ENCODE measurements at regions of chr17 and their contacts with region 1.

Region 1: GRCh38 chr17:9470171-9470570 is 105.4 kb downstream of the STX8 start:
- DNase-seq: no peak
- H3K4me3 Mint-ChIP-seq: peak overlapping the region; percentile 26
- H3K27ac Mint-ChIP-seq: peak overlapping the region; percentile 77
- H3K4me1 Mint-ChIP-seq: peaks cover 45% of the 10 kb centered on the region
- H3K27me3 Mint-ChIP-seq: no peaks in the 10 kb centered on the region

Region 2: DNA sequence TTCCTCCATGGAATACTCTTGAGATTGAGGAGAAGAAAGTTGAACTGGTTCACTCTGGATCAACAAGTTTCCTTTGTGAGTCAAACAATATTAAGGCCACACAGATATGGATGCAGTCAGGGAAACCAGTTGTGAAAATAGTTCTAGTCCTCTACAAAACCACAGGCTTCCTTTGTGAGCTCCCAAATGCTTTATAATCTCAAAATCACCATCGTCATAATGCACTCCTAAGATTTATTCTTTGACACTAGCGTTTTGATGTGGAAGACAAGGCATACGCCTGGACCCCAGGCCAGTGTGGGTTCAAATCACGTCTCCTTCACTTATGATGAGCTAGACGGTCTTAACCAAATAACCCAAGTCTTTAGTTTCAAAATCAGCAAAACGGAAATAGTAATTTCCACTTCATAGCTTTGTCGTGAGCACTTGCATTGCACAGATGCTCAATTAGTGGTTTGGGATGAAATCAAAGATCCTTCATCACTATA is 37.2 kb before region 1 on chr17:
- CTCF ChIA-PET with region 1: no interaction called
- POLR2A ChIA-PET with region 1: no interaction called
- intact Hi-C with region 1: loop called (anchors 1 kb)
- DNase-seq: peak; percentile 28
- H3K4me3 Mint-ChIP-seq: no peak overlapping the region
- H3K27ac Mint-ChIP-seq: no peak overlapping the region
- H3K4me1 Mint-ChIP-seq: peaks cover 21% of the 10 kb centered on the region
- H3K27me3 Mint-ChIP-seq: no peaks in the 10 kb centered on the region

Region 3: DNA sequence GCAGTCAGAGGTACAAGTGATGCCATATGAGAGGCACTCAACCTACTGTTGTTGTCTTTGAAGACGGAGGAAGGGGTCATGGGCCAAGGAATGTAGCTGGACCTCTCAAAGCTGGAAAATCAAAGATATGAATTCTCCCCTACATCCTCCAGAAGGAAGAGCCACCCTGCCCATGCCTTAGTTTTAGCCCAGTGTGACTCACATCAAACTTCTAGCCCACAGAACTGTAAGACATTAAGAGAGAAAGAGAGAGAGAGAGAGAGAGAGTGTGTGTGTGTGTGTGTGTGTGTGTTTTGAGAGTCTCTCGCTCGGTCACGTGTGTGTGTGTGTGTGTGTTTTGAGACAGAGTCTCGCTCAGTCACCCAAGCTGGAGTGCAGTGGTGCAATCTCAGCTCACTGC is 18.4 kb after region 1 on chr17:
- CTCF ChIA-PET with region 1: no interaction called
- POLR2A ChIA-PET with region 1: no interaction called
- intact Hi-C with region 1: no loop called
- DNase-seq: no peak
- H3K4me3 Mint-ChIP-seq: no peak overlapping the region
- H3K27ac Mint-ChIP-seq: no peak overlapping the region
- H3K4me1 Mint-ChIP-seq: no peaks in the 10 kb centered on the region
- H3K27me3 Mint-ChIP-seq: no peaks in the 10 kb centered on the region

Region 4: GRCh38 chr17:9529033-9529700 is 59.0 kb after region 1 on chr17:
- CTCF ChIA-PET with region 1: no interaction called
- POLR2A ChIA-PET with region 1: no interaction called
- intact Hi-C with region 1: loop called (anchors 5 kb)
- DNase-seq: no peak
- H3K4me3 Mint-ChIP-seq: no peak overlapping the region
- H3K27ac Mint-ChIP-seq: no peak overlapping the region
- H3K4me1 Mint-ChIP-seq: peaks cover 13% of the 10 kb centered on the region
- H3K27me3 Mint-ChIP-seq: no peaks in the 10 kb centered on the region

Region 5: GRCh38 chr17:9566067-9566466 is 95.9 kb after region 1 on chr17:
- CTCF ChIA-PET with region 1: no interaction called
- POLR2A ChIA-PET with region 1: no interaction called
- intact Hi-C with region 1: loop called (anchors 2 kb)
- DNase-seq: no peak
- H3K4me3 Mint-ChIP-seq: peak overlapping the region; percentile 14
- H3K27ac Mint-ChIP-seq: no peak overlapping the region
- H3K4me1 Mint-ChIP-seq: peaks cover 25% of the 10 kb centered on the region
- H3K27me3 Mint-ChIP-seq: no peaks in the 10 kb centered on the region